Head of caudate nucleus (tissue), 42 donors: ENCODE measurements at regions of chr1 and their contacts with region 1.

Region 1: DNA sequence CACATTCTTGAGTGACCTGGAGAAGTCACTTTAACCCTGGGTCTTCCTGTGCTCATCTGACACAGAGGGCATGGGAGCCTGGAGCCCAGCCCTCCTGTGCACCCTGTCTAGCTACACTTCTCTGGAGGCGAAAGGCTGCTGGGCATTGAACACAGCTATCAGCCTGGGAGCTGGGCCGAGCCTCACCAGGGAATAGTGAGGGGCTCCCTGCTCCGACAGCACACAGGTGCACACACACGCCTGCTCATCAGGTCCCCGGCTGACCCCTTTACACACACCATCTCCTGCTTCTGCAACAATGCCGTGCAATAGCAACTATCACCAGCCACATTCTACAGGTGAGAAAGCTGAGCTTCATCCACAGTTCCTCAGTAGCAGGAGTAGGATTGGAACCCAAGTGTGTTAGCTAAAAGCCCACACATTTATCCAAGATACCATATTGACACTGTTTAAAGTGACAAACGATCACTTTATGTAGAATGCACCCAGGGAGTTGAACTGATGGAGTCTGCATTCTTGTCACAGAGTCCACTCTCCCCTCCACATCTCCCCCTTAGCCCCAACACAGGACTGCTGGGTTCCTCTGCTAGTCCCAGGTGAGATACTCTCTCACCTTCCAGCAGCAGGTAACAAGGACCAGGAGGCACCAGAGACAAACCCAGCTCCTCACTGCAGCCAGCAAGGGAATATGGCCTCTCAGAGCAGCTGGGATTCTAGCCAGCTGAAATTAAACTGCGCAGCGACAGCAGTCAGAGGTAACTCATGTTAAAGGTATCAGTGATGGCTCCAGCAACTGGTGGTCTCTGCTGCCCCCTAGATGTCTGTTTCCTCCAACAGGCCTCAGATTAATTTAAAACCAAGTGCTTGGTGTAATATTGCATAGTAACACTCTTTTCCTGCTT is 18.3 kb upstream of the CAPN8 start:
- DNase-seq: peak; percentile 24 to 87 (median 68)

Region 2: GRCh38 chr1:223133824-223134435 is 549.9 kb before region 1 on chr1:
- intact Hi-C with region 1: loop called (anchors 5 kb)
- DNase-seq: peak; percentile 52 to 93 (median 86)

Region 3: GRCh38 chr1:223479718-223480425 is 204.0 kb before region 1 on chr1:
- intact Hi-C with region 1: no loop called
- DNase-seq: peak in 8 of 42 donors; percentile 3 to 41 (median 16)

Region 4: DNA sequence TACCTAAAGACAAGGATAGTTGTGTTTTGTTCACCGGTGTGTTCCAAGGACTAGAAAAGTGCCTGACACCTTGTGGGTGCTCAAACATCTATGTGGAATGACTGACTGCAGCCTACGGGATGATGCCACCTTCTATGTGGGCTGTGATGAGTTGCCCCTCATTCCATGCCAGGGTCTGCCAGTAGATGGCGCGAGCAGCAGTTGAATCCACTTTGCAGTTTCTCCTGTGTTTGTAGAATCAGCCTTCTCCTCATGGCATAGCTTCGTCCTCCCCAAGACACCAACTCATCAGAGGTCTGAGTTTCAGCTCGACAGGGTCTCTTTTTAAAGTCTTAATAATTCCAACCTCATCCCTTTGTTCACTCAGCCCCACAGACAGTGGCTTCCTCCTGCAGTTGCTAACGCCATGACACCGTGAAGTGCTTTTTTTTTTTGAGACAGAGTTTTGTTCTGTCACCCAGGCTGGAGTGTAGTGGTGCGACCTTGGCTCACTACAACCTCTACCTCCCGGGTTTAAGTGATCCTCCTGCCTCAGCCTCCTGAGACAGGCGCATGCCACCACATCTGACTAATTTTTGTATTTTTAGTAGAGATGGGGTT is 152.0 kb before region 1 on chr1:
- intact Hi-C with region 1: loop called (anchors 5 kb)
- DNase-seq: peak; percentile 53 to 90 (median 80)